Activated T-helper 1 cell treated with anti-CD3 and anti-CD28 coated beads, Interleukin-12 subunit alpha, Interleukin-12 subunit beta, Interleukin-2, Interleukin-4 antibody, amounts not matched to agents 30 ng/mL and 10 ng/mL and 1 ng/mL, durations not matched to agents 14 hours and 24 hours and 36 hours (primary cell): ENCODE measurements at regions of chr12 and their contacts with region 1.

Region 1: GRCh38 chr12:104201238-104202001 is 14.2 kb upstream of the TXNRD1 start:
- DNase-seq: peak; percentile 24
- H3K4me3 Mint-ChIP-seq: no peak overlapping the region
- H3K27ac Mint-ChIP-seq: no peak overlapping the region
- H3K4me1 Mint-ChIP-seq: peaks cover 4% of the 10 kb centered on the region
- H3K27me3 Mint-ChIP-seq: peaks cover 12% of the 10 kb centered on the region

Region 2: DNA sequence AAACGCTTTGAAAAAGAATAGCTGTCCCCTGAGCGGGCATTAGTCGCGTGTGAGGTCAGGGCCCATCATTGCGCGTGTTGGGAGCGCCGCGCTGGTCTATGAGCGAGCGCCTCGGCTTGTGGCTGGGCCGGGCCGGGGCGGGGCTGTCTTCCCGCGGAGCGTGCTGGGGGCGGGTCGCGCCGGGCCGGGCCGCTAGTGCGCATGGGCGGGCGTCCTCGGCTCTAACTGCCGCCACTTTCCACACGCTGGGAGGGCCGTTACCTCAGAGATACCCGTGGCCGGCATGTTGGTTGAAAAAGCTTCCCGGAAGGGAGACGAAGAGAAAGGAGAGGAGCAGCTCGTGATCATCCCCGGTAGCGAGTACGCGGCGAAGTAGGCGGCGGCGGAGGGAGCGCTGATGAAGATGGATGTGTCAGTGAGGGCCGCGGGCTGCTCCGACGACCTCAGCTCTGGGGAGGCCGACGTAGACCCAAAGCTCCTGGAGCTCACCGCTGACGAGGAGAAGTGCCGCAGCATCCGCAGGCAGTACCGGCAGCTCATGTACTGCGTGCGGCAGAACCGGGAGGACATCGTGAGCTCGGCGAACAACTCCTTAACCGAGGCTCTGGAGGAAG is 102.2 kb after region 1 on chr12 and contains the start of gene EID3:
- intact Hi-C with region 1: loop called (anchors 5 kb)
- DNase-seq: peak; percentile 92
- H3K4me3 Mint-ChIP-seq: peak within 1 kb of the TSS; percentile 93
- H3K27ac Mint-ChIP-seq: peak within 1 kb of the TSS; percentile 99
- H3K4me1 Mint-ChIP-seq: peaks cover 66% of the 10 kb centered on the region
- H3K27me3 Mint-ChIP-seq: no peaks in the 10 kb centered on the region
- total RNA-seq, gene EID3: 10.5 and 10.6 TPM in 2 replicates

Region 3: GRCh38 chr12:104358347-104359003 is 157.1 kb after region 1 on chr12:
- intact Hi-C with region 1: loop called (anchors 1 kb)
- DNase-seq: peak; percentile 58
- H3K4me3 Mint-ChIP-seq: no peak overlapping the region
- H3K27ac Mint-ChIP-seq: no peak overlapping the region
- H3K4me1 Mint-ChIP-seq: peaks cover 7% of the 10 kb centered on the region
- H3K27me3 Mint-ChIP-seq: peaks cover 2% of the 10 kb centered on the region